Left cardiac atrium (tissue), 4 donors: ENCODE measurements at regions of chr2 and their contacts with region 1.

Region 1: DNA sequence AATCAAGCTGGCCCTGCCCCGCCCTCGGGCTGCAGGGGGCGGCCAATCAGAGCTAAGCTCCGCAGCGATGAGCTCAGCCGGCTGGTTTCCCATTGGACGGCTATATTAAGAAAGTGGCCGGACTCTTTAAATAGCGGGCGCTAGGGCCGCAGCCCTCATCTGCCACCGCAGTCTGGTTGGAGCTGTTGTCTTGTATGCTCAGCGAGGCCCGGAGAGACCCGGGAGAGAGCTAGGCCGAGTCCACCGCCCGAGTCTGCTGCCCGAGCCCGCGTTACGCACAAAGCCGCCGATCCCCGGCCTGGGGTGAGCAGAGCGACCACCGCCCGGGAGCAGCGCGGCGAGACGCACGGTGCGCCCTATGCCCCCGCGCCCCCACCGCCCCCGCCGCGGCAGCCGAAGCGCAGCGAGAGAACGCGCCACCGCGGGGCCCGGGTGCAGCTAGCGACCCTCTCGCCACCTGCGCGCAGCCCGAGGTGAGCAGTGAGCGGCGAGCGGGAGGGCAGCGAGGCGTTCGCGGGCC is at the start of gene RHOB:
- DNase-seq: peak; percentile 97
- ATAC-seq: peak; percentile 84 to 89
- total RNA-seq, gene RHOB: 224 to 279 TPM

Region 2: GRCh38 chr2:20223407-20224163 is 223.4 kb before region 1 on chr2:
- intact Hi-C with region 1: no loop called
- DNase-seq: peak; percentile 48
- ATAC-seq: peak; percentile 42 to 48

Region 3: DNA sequence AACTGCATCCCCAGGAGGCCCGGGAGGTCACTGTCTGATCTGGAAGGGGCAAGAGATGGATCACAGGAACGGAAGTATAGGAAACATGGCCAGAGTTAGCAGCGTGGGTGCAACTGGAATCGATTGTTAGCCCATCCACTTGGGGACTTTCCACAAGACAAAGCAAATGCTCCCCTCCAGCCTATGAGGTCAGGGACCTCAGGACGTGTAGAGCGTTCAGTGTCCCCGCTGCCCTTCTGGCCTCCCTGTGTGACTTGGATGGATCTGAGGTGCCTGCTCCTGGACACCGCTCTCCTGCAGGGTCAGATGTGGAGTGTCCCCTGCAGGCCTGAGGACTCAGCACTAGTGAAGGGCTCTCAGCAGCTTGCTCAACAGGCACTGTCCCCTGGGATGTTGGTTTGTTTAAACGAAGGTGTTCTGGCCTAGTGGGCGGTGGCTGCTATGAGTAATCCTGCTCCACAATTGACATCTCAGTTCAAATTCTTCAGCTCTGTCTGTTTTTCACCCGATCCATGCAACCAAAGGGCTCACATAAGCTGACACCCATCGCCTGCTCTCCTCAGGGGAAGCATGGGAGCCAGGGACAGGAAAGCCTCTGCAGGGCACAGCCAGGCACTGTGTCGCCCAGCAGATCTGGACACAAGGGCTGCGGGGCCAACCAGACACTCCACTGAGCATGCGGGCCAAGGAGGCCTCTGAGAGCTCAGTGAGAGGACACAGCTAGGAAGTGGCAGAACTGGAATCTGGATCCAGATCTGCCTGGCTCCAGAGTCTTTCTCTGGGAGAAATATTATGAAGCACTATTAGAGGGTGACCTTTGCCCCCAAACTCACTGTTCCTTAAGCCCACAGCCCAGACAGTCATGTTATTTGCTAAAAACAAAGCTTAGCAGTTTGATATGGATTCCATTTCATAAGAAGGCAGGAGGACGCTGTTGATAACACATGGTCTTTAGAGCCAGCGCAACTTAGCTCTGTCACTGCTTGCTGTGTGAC is 78.4 kb after region 1 on chr2:
- intact Hi-C with region 1: loop called in 1 of 2 experiments (anchors 10 kb)
- DNase-seq: peak; percentile 57
- ATAC-seq: peak; percentile 35 to 55

Region 4: DNA sequence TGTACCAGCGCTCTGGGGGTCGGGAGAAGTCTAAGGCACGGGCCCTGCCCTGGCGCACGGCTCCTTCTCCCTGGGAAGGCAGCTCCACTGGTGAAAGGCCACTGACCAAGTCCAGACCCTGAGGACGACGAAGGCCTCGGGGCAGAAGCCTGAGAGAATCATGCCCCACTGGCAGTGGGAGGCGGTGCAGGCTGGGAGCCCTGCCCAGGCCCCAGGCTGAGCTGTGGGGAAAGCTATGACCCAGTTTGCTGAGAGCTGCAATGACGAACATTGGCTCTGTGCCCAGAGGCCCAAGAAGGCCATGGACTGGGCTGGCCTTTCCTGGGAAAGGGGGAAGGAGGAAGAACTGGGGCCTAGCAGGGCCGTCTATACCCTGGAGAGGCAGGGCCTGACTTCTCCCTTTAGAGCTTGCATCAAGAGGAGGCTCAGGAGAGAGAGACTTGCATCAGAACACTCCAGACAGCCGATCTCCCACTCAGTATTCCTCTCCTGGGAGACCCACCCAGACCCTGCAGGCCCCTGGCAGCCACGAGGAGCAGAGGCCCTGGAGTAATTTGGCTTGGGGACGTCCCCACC is 171.0 kb after region 1 on chr2:
- intact Hi-C with region 1: loop called in 1 of 2 experiments (anchors 5 kb)
- DNase-seq: peak; percentile 99
- ATAC-seq: peak; percentile 83 to 90

Region 5: GRCh38 chr2:20635675-20636584 is 189.0 kb after region 1 on chr2:
- intact Hi-C with region 1: loop called (anchors 2 to 5 kb)
- DNase-seq: peak; percentile 88
- ATAC-seq: peak; percentile 81 to 86

Region 6: GRCh38 chr2:20642055-20642971 is 195.3 kb after region 1 on chr2:
- intact Hi-C with region 1: loop called in 1 of 2 experiments (anchors 5 kb)
- DNase-seq: peak; percentile 86
- ATAC-seq: peak; percentile 87 to 94